ENCODE measurements at regions of chr4 and their contacts with region 1.

Region 1: GRCh38 chr4:78864405-78865024 is 74.7 kb downstream of the PAQR3 start:
- DNase-seq: peak; percentile 63
- H3K4me3 ChIP-seq: no peak overlapping the region
- H3K27ac ChIP-seq: no peak overlapping the region
- H3K27me3 ChIP-seq: no peaks in the 10 kb centered on the region
- CTCF ChIP-seq: peak; percentile 68

Region 2: GRCh38 chr4:78602334-78602733 is 262.2 kb before region 1 on chr4:
- CTCF ChIA-PET with region 1: interaction called, 13 read pairs
- POLR2A ChIA-PET with region 1: no interaction called
- DNase-seq: no peak
- H3K4me3 ChIP-seq: no peak overlapping the region
- H3K27ac ChIP-seq: no peak overlapping the region
- H3K27me3 ChIP-seq: no peaks in the 10 kb centered on the region
- CTCF ChIP-seq: no peak

Region 3: GRCh38 chr4:78612398-78613178 is 251.9 kb before region 1 on chr4:
- CTCF ChIA-PET with region 1: interaction called, 30 read pairs
- POLR2A ChIA-PET with region 1: no interaction called
- DNase-seq: peak; percentile 26
- H3K4me3 ChIP-seq: no peak overlapping the region
- H3K27ac ChIP-seq: no peak overlapping the region
- H3K27me3 ChIP-seq: no peaks in the 10 kb centered on the region
- CTCF ChIP-seq: peak; percentile 68

Region 4: GRCh38 chr4:78845472-78845871 is 19.0 kb before region 1 on chr4:
- CTCF ChIA-PET with region 1: interaction called, 17 read pairs
- POLR2A ChIA-PET with region 1: no interaction called
- DNase-seq: no peak
- H3K4me3 ChIP-seq: no peak overlapping the region
- H3K27ac ChIP-seq: no peak overlapping the region
- H3K27me3 ChIP-seq: no peaks in the 10 kb centered on the region
- CTCF ChIP-seq: no peak

Region 5: DNA sequence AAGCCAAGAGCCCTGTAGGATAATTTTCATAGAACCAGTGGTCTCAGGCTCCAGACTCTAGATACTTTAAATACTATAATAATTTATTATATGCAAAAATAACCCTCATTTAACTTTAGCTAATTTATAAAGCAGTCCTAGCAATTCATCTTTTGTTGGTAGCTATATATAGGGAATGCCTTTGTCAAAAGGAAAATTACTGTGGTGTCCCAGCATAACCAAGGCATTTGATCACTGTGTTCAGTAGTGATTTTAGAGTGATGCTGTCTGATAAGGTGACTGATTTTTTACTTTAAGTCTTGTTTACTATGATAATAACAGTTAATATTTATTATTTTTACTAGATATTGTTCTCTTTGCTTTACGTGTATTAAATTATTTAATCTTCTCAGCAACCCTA is 13.5 kb after region 1 on chr4:
- CTCF ChIA-PET with region 1: interaction called, 14 read pairs
- POLR2A ChIA-PET with region 1: interaction called, 4 read pairs
- DNase-seq: no peak
- H3K4me3 ChIP-seq: no peak overlapping the region
- H3K27ac ChIP-seq: no peak overlapping the region
- H3K27me3 ChIP-seq: no peaks in the 10 kb centered on the region
- CTCF ChIP-seq: no peak

Region 6: GRCh38 chr4:79030973-79031372 is 166.5 kb after region 1 on chr4:
- CTCF ChIA-PET with region 1: no interaction called
- POLR2A ChIA-PET with region 1: no interaction called
- DNase-seq: no peak
- H3K4me3 ChIP-seq: no peak overlapping the region
- H3K27ac ChIP-seq: no peak overlapping the region
- H3K27me3 ChIP-seq: no peaks in the 10 kb centered on the region
- CTCF ChIP-seq: no peak